CD8-positive, alpha-beta T cell (primary cell): ENCODE measurements at regions of chr4 and their contacts with region 1.

Region 1: GRCh38 chr4:184825896-184826690 is at the start of gene ACSL1:
- DNase-seq: peak; percentile 48 to 88 (median 77)
- ATAC-seq: peak; percentile 84
- H3K4me3 ChIP-seq: peak within 1 kb of the TSS; percentile 56 to 78
- H3K4me3 Mint-ChIP-seq: peak within 1 kb of the TSS; percentile 91
- H3K27ac ChIP-seq: peak within 1 kb of the TSS; percentile 31 to 54
- H3K27ac Mint-ChIP-seq: peak within 1 kb of the TSS; percentile 90
- H3K4me1 ChIP-seq: peaks cover 22% of the 10 kb centered on the region
- H3K4me1 Mint-ChIP-seq: peaks cover 39% of the 10 kb centered on the region
- H3K27me3 ChIP-seq: no peaks in the 10 kb centered on the region
- H3K27me3 Mint-ChIP-seq: no peaks in the 10 kb centered on the region
- CTCF ChIP-seq: no peak
- total RNA-seq, gene ACSL1: 18.4 to 21.3 TPM

Region 2: DNA sequence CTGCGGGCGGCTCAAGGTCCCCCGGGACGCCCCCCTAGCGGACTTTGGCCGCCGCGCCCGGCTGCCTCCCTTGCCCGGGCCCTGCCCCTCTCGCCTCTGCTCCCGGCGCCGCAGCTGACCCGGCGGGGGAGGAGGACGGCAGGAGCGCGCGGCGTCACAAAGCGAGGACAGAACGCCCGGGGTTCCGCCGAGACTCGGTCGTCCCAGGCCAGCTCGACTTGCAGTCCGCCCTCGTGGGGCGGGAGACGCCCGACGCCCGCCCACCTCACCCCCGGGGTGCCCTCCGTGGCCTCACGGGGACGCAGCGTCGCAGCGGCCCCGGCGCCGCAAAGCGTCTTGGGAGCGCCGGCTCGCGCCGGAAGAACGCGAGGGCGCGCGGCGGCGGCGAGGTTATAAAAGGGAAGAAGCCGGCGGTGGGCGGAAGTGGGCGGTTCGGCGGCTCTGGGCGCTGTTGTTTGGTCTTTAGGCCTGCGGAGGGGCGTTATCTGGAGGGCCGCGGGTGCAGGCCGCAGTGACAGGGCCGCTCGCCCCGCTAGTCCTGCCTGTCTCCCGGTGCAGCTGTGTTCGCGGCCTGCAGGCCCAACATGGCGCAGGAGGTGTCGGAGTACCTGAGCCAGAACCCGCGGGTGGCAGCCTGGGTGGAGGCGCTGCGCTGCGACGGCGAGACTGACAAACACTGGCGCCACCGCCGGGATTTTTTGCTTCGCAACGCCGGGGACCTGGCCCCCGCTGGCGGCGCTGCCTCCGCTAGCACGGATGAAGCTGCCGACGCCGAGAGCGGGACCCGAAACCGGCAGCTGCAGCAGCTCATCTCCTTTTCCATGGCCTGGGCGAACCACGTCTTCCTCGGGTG is 1381.7 kb before region 1 on chr4 and contains the start of gene CDKN2AIP:
- CTCF ChIA-PET with region 1: no interaction called
- POLR2A ChIA-PET with region 1: no interaction called
- intact Hi-C with region 1: loop called (anchors 5 to 10 kb)
- DNase-seq: peak; percentile 90 to 98 (median 93)
- ATAC-seq: peak; percentile 85
- H3K4me3 ChIP-seq: peak within 1 kb of the TSS; percentile 84 to 92
- H3K4me3 Mint-ChIP-seq: peak within 1 kb of the TSS; percentile 98
- H3K27ac ChIP-seq: peak within 1 kb of the TSS; percentile 84 to 91
- H3K27ac Mint-ChIP-seq: peak within 1 kb of the TSS; percentile 99
- H3K4me1 ChIP-seq: peaks cover 43% of the 10 kb centered on the region
- H3K4me1 Mint-ChIP-seq: peaks cover 59% of the 10 kb centered on the region
- H3K27me3 ChIP-seq: no peaks in the 10 kb centered on the region
- H3K27me3 Mint-ChIP-seq: no peaks in the 10 kb centered on the region
- CTCF ChIP-seq: no peak
- total RNA-seq, gene CDKN2AIP: 51.2 to 51.9 TPM

Region 3: DNA sequence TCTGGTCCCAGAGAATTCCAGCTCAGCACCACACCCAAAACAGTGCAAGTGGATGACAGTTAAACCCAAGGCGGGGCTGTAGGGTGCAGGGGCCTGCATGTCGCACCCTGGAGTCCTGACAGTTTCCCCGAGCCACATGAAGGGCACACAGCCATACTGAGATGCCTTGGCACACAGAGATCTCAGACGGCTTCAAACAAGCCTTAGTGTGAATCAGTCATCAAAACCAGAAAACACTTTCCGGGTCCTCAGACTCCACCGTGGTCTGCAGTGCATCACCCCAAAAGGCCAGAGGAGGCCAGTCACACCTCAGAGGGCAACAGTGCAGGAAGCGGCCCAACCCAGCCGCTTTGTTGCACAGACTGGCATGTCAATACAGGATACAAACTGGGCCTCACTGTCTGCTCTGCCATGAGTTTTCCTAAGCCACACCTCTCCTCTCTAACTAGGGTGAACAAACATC is 543.8 kb before region 1 on chr4:
- CTCF ChIA-PET with region 1: no interaction called
- POLR2A ChIA-PET with region 1: no interaction called
- intact Hi-C with region 1: no loop called
- DNase-seq: peak; percentile 26 to 73 (median 50)
- ATAC-seq: peak; percentile 89
- H3K4me3 ChIP-seq: no peak overlapping the region
- H3K4me3 Mint-ChIP-seq: peak overlapping the region; percentile 11
- H3K27ac ChIP-seq: peak overlapping the region in 1 of 2 experiments; percentile 56
- H3K27ac Mint-ChIP-seq: no peak overlapping the region
- H3K4me1 ChIP-seq: peaks cover 30% of the 10 kb centered on the region
- H3K4me1 Mint-ChIP-seq: peaks cover 33% of the 10 kb centered on the region
- H3K27me3 ChIP-seq: no peaks in the 10 kb centered on the region
- H3K27me3 Mint-ChIP-seq: no peaks in the 10 kb centered on the region
- CTCF ChIP-seq: peak; percentile 22

Region 4: GRCh38 chr4:184417802-184418511 is 408.1 kb before region 1 on chr4:
- CTCF ChIA-PET with region 1: no interaction called
- POLR2A ChIA-PET with region 1: no interaction called
- intact Hi-C with region 1: loop called in 1 of 2 experiments (anchors 10 kb)
- DNase-seq: peak in 3 of 9 experiments; percentile 14 to 68 (median 53)
- ATAC-seq: peak; percentile 71
- H3K4me3 ChIP-seq: peak overlapping the region in 1 of 2 experiments; percentile 44
- H3K4me3 Mint-ChIP-seq: peak overlapping the region; percentile 73
- H3K27ac ChIP-seq: peak overlapping the region; percentile 61 to 80
- H3K27ac Mint-ChIP-seq: peak overlapping the region; percentile 98
- H3K4me1 ChIP-seq: peaks cover 33% of the 10 kb centered on the region
- H3K4me1 Mint-ChIP-seq: peaks cover 71% of the 10 kb centered on the region
- H3K27me3 ChIP-seq: no peaks in the 10 kb centered on the region
- H3K27me3 Mint-ChIP-seq: no peaks in the 10 kb centered on the region
- CTCF ChIP-seq: no peak

Region 5: DNA sequence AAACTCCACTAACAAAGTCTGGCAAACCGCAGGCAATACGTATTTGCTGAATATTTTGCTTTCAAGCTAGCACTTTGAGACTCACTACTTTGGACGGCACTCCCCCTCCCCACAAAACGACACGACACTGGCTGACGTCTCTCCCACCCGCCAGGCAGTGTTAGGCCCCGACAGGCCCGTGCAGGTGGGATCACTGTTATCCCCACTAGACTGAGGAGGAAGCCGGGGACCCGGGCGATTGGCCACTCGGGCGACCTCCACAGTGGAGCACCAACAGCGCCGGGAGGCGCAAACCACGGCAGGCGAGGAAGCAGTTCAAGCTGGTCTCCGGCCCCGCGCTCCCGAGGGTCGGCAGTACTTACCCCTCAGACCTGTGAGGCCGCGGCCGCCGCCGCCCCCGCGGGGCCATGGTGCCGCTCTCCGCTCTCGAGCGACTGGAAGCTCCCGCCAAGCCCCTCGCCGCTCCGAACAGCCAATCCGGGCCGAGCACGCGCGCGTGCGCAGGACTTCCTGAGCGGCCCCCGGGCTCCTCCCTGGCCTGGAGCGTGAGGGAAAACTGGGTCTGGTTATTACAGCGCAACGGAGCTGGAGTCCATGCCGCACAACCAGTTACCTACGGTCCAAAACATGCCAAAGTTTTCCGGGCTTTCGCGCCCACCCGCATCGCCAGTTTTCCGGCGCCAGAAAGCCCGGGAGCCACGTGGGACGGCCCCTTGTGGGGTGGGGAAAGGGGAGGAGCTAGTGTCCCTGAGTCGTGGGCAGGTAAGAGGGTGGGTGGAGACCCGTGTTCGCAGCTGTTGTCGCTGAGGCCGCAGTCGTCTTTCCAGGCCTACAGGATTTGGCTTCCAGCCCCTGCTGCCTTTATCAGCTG is 92.2 kb before region 1 on chr4 and contains the start of gene CENPU:
- CTCF ChIA-PET with region 1: no interaction called
- POLR2A ChIA-PET with region 1: interaction called, 8 read pairs
- intact Hi-C with region 1: loop called (anchors 1 to 2 kb)
- DNase-seq: peak; percentile 87 to 97 (median 94)
- ATAC-seq: peak; percentile 95
- H3K4me3 ChIP-seq: peak within 1 kb of the TSS; percentile 74 to 79
- H3K4me3 Mint-ChIP-seq: peak within 1 kb of the TSS; percentile 87
- H3K27ac ChIP-seq: peak within 1 kb of the TSS; percentile 2 to 43
- H3K27ac Mint-ChIP-seq: peak within 1 kb of the TSS; percentile 84
- H3K4me1 ChIP-seq: peaks cover 8% of the 10 kb centered on the region
- H3K4me1 Mint-ChIP-seq: peaks cover 18% of the 10 kb centered on the region
- H3K27me3 ChIP-seq: no peaks in the 10 kb centered on the region
- H3K27me3 Mint-ChIP-seq: no peaks in the 10 kb centered on the region
- CTCF ChIP-seq: no peak
- total RNA-seq, gene CENPU: 3.4 TPM

Region 6: GRCh38 chr4:185040523-185040922 is 214.4 kb after region 1 on chr4:
- CTCF ChIA-PET with region 1: no interaction called
- POLR2A ChIA-PET with region 1: no interaction called
- intact Hi-C with region 1: no loop called
- DNase-seq: no peak
- ATAC-seq: no peak
- H3K4me3 ChIP-seq: no peak overlapping the region
- H3K4me3 Mint-ChIP-seq: no peak overlapping the region
- H3K27ac ChIP-seq: no peak overlapping the region
- H3K27ac Mint-ChIP-seq: no peak overlapping the region
- H3K4me1 ChIP-seq: peaks cover 6% of the 10 kb centered on the region
- H3K4me1 Mint-ChIP-seq: peaks cover 4% of the 10 kb centered on the region
- H3K27me3 ChIP-seq: no peaks in the 10 kb centered on the region
- H3K27me3 Mint-ChIP-seq: peaks cover 16% of the 10 kb centered on the region
- CTCF ChIP-seq: no peak

Region 7: DNA sequence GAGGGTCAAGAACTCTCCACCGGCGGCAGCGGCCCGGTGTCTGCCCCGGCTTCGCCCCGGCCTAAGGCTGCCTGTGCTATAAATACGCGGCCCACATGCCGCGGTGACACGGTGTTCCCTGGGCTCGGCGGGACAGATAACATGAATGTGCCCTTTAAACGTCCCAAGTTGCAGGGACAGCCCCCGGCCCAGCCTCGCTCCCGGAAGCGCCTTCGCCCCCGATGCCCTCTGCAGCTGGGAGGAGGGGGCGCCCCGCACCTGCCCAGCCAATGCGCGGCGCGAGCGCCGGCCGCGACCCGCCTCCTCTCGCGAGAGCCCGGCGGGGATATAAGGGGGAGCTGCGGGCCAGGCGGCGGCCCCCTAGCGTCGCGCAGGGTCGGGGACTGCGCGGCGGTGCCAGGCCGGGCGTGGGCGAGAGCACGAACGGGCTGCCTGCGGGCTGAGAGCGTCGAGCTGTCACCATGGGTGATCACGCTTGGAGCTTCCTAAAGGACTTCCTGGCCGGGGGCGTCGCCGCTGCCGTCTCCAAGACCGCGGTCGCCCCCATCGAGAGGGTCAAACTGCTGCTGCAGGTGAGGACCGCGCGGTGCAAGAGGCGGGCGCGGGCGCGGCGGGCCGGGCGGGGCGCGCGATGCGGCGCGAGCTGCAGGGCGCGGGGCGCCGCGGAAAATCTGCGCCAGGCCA is 317.0 kb after region 1 on chr4 and contains the start of gene SLC25A4:
- CTCF ChIA-PET with region 1: no interaction called
- POLR2A ChIA-PET with region 1: no interaction called
- intact Hi-C with region 1: loop called (anchors 2 to 5 kb)
- DNase-seq: peak; percentile 73 to 94 (median 86)
- ATAC-seq: peak; percentile 93
- H3K4me3 ChIP-seq: peak within 1 kb of the TSS; percentile 65 to 84
- H3K4me3 Mint-ChIP-seq: peak within 1 kb of the TSS; percentile 91
- H3K27ac ChIP-seq: peak within 1 kb of the TSS; percentile 51 to 62
- H3K27ac Mint-ChIP-seq: peak within 1 kb of the TSS; percentile 91
- H3K4me1 ChIP-seq: peaks cover 15% of the 10 kb centered on the region
- H3K4me1 Mint-ChIP-seq: peaks cover 20% of the 10 kb centered on the region
- H3K27me3 ChIP-seq: no peaks in the 10 kb centered on the region
- H3K27me3 Mint-ChIP-seq: peaks cover 8% of the 10 kb centered on the region
- CTCF ChIP-seq: peak; percentile 59
- total RNA-seq, gene SLC25A4: 10.0 to 11.0 TPM

Region 8: DNA sequence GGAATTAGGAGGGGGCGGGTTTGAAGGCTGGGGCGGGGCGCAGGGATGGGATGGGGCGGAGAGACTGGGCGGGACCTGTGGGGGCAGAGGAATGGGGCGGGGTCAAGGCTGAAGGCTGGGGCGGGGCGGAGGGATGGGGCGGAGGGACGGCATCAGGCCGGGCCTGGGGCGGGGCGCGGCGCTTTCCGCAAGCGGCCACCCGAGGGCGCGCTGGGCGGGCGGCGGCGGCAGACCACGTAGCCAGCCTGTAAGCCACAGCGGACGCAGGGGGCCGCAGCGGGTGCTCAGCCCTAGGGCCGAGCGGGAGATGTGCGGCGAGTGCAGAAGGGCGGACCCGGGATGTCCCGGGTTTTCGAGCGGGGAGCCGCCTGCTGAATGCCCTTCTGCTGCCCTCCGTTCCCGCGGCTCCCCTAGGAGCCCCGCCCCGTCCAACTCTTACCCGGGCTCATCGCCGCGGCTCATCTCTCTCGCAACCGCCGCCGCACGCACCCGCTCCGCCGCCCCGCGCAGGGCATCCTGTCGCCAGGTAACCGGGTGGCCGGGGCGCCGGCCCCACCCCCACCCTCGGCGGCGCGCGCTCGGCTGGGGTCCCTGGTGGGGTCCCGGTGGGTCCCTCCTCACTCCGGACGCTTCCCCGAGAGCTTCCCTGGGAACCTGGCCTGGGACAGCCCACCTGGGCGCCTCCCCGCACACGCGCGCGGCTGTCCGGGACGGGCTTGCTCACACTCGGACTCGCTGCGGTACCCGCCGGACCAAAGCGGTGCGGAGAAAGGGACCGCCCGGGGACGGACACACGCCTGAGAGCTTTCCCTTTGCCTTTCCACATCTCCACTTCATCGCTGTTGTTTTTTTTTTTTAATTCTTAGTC is 645.4 kb after region 1 on chr4 and contains the start of gene CCDC110:
- CTCF ChIA-PET with region 1: no interaction called
- POLR2A ChIA-PET with region 1: no interaction called
- intact Hi-C with region 1: loop called (anchors 2 to 5 kb)
- DNase-seq: peak; percentile 79 to 96 (median 88)
- ATAC-seq: peak; percentile 95
- H3K4me3 ChIP-seq: peak within 1 kb of the TSS; percentile 60 to 85
- H3K4me3 Mint-ChIP-seq: peak within 1 kb of the TSS; percentile 93
- H3K27ac ChIP-seq: peak within 1 kb of the TSS; percentile 27 to 34
- H3K27ac Mint-ChIP-seq: peak within 1 kb of the TSS; percentile 67
- H3K4me1 ChIP-seq: peaks cover 13% of the 10 kb centered on the region
- H3K4me1 Mint-ChIP-seq: peaks cover 16% of the 10 kb centered on the region
- H3K27me3 ChIP-seq: no peaks in the 10 kb centered on the region
- H3K27me3 Mint-ChIP-seq: peaks cover 2% of the 10 kb centered on the region
- CTCF ChIP-seq: peak; percentile 64
- total RNA-seq, gene CCDC110: 0.57 TPM in 1 of 2 experiments, not detected in the other